ENCODE measurements at regions of chr1 and their contacts with region 1.

Region 1: DNA sequence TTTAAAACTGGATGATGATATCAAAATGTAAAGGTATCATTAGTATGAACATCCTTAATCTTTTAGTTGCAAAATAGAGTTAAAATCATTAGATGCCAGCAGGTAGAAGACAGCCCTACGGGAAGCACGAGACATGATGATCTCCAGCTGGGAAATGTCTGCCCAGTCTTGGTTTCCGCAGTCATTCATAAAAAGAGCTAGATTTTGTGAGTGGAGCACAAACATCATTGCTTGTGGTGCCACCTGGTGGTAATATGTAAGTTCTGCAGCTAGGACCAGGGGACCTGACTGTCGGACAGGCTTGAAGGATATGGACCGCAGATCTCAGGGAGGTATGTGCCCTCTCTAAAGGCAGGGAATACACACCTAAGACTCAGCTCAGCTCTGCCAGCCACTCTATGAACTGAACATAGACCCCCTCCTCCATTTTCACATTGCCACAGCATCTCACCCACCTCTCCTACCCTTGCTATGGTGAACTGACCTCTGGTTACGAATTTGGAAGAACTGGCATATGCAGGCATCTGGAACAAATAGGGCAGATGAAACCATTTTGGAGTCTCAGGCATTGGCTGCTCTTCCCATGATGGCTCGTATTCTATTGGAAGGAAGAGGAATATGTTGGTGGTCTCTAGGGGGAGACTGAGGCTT is 9.2 kb downstream of the FCMR start:
- DNase-seq: peak; percentile 67 to 71 (median 68)
- H3K4me3 ChIP-seq: no peak overlapping the region
- H3K4me3 Mint-ChIP-seq: peak overlapping the region; percentile 21 to 68 (median 54)
- H3K27ac ChIP-seq: peak overlapping the region; percentile 29
- H3K27ac Mint-ChIP-seq: peak overlapping the region; percentile 71 to 93 (median 92)
- H3K4me1 ChIP-seq: peaks cover 98% of the 10 kb centered on the region
- H3K4me1 Mint-ChIP-seq: peaks cover 76 to 96% (median 87%) of the 10 kb centered on the region in 4 donors
- H3K27me3 ChIP-seq: no peaks in the 10 kb centered on the region
- H3K27me3 Mint-ChIP-seq: no peaks in the 10 kb centered on the region

Region 2: GRCh38 chr1:206716870-206717673 is 195.5 kb before region 1 on chr1:
- CTCF ChIA-PET with region 1: interaction called, 10 read pairs
- POLR2A ChIA-PET with region 1: interaction called, 3 read pairs
- intact Hi-C with region 1: no loop called
- DNase-seq: peak; percentile 21 to 59 (median 33)
- H3K4me3 ChIP-seq: no peak overlapping the region
- H3K4me3 Mint-ChIP-seq: peak overlapping the region; percentile 57 to 83 (median 73)
- H3K27ac ChIP-seq: peak overlapping the region; percentile 34
- H3K27ac Mint-ChIP-seq: peak overlapping the region; percentile 87 to 97 (median 95)
- H3K4me1 ChIP-seq: peaks cover 86% of the 10 kb centered on the region
- H3K4me1 Mint-ChIP-seq: peaks cover 68 to 90% (median 81%) of the 10 kb centered on the region in 4 donors
- H3K27me3 ChIP-seq: no peaks in the 10 kb centered on the region
- H3K27me3 Mint-ChIP-seq: no peaks in the 10 kb centered on the region

Region 3: DNA sequence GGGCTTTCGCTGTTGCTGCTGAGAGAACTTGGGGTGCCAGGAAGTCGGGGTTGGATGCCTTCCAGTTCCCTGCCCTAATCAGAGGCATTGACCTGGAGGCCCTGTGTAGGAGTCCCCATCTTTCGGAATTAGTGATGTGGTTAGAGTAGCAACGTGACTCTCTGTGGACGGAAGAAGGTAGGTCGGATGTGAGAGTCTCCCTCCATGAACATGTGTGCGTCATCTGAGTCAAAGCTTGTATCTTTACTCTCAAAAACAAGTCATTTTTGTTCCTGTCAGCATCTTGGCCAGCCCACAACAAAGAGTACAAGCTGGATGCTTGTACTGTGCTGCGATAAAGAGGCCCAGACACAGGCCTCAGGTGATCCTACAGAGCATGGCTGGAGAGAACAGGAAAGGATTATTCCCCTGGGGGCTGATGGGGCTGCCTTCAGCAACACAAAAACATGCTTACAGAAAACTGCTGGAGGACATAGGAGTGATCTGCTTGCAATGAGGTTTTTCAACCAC is 109.3 kb before region 1 on chr1:
- CTCF ChIA-PET with region 1: interaction called, 85 read pairs
- POLR2A ChIA-PET with region 1: interaction called, 14 read pairs
- intact Hi-C with region 1: no loop called
- DNase-seq: peak; percentile 91 to 96 (median 94)
- H3K4me3 ChIP-seq: peak overlapping the region in 1 of 2 donors; percentile 6
- H3K4me3 Mint-ChIP-seq: peak overlapping the region; percentile 4 to 74 (median 56)
- H3K27ac ChIP-seq: peak overlapping the region; percentile 67
- H3K27ac Mint-ChIP-seq: peak overlapping the region; percentile 89 to 99 (median 97)
- H3K4me1 ChIP-seq: peaks cover 60% of the 10 kb centered on the region
- H3K4me1 Mint-ChIP-seq: peaks cover 45 to 83% (median 66%) of the 10 kb centered on the region in 4 donors
- H3K27me3 ChIP-seq: no peaks in the 10 kb centered on the region
- H3K27me3 Mint-ChIP-seq: no peaks in the 10 kb centered on the region

Region 4: GRCh38 chr1:206856674-206857464 is 55.7 kb before region 1 on chr1:
- CTCF ChIA-PET with region 1: interaction called, 73 read pairs
- POLR2A ChIA-PET with region 1: interaction called, 4 read pairs
- intact Hi-C with region 1: no loop called
- DNase-seq: peak in 4 of 5 donors; percentile 8 to 22 (median 16)
- H3K4me3 ChIP-seq: no peak overlapping the region
- H3K4me3 Mint-ChIP-seq: no peak overlapping the region
- H3K27ac ChIP-seq: no peak overlapping the region
- H3K27ac Mint-ChIP-seq: no peak overlapping the region
- H3K4me1 ChIP-seq: peaks cover 7% of the 10 kb centered on the region
- H3K4me1 Mint-ChIP-seq: peaks cover 6 to 10% (median 8%) of the 10 kb centered on the region in 4 donors
- H3K27me3 ChIP-seq: no peaks in the 10 kb centered on the region
- H3K27me3 Mint-ChIP-seq: peaks cover 0 to 9% of the 10 kb centered on the region in 2 donors

Region 5: DNA sequence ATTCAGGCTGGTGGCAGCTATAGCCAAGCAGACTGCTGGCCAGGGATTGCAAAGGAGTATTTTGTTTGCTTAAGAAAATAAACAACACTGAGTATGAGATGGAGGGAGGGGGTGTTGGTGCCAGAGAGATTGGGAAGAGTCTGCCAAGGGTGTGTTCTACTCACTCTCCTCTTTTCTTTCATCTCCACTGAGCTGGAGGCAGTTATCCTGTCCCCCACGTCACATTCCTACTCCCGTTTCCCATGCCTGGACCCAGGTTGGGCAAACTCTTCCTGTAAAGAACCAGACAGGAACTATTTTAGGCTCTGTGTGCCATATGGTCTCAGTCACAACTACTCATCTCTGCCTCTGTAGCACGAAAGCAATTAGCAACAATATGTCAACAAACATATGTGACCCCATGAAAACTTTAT is 16.7 kb before region 1 on chr1:
- CTCF ChIA-PET with region 1: interaction called, 30 read pairs
- POLR2A ChIA-PET with region 1: interaction called, 139 read pairs
- intact Hi-C with region 1: no loop called
- DNase-seq: no peak
- H3K4me3 ChIP-seq: no peak overlapping the region
- H3K4me3 Mint-ChIP-seq: no peak overlapping the region
- H3K27ac ChIP-seq: no peak overlapping the region
- H3K27ac Mint-ChIP-seq: peak overlapping the region in 1 of 7 donors; percentile 55
- H3K4me1 ChIP-seq: peaks cover 9% of the 10 kb centered on the region
- H3K4me1 Mint-ChIP-seq: peaks cover 5 to 30% (median 17%) of the 10 kb centered on the region in 4 donors
- H3K27me3 ChIP-seq: no peaks in the 10 kb centered on the region
- H3K27me3 Mint-ChIP-seq: peaks cover 0 to 3% of the 10 kb centered on the region in 2 donors

Region 6: DNA sequence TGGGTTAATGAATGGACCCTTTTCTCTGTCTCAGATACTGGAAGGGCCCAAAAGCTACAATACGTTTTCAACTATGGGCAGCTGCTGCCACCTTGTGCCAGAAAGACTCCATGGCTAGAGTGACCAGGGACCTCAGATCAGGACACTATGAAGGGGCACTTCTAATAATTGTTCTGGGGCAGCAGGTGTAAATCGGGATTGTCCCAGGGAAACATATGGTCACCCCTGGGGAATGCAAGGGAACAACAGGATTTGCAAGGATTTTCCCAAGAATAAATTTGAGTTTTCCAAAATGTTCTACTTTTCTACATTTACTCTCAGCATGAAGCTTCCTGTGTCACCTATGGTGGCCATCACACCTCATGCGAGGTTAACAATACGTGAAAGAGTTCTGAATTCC is 69.6 kb after region 1 on chr1:
- CTCF ChIA-PET with region 1: interaction called, 28 read pairs
- POLR2A ChIA-PET with region 1: interaction called, 5 read pairs
- intact Hi-C with region 1: loop called (anchors 1 kb)
- DNase-seq: peak; percentile 50 to 60 (median 53)
- H3K4me3 ChIP-seq: no peak overlapping the region
- H3K4me3 Mint-ChIP-seq: no peak overlapping the region
- H3K27ac ChIP-seq: no peak overlapping the region
- H3K27ac Mint-ChIP-seq: no peak overlapping the region
- H3K4me1 ChIP-seq: no peaks in the 10 kb centered on the region
- H3K4me1 Mint-ChIP-seq: no peaks in the 10 kb centered on the region
- H3K27me3 ChIP-seq: no peaks in the 10 kb centered on the region
- H3K27me3 Mint-ChIP-seq: peaks cover 12 to 17% of the 10 kb centered on the region in 2 donors

Region 7: DNA sequence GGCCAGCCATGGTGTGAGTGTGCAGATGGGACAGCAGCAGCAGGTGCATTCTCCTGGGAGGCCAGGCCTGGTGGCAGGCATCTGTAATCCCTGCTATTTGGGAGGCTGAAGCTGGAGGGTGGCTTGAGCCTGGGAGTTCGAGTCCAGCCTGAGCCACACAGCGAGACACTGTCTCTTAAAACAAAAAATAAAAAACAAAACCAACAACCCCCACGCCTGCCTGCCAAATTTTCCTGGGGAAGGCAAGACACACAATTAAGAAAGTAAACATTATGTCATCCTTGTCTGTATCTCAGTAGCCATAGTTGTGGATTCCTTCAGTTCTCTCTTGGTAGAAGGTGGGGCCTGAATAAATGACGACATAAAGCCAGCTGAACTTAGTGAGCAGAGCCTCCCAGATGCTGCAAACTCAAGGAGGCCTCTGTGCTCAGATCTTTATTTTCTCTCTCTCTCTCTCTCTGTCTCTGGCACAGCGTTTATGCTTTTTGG is 1056.0 kb after region 1 on chr1:
- CTCF ChIA-PET with region 1: no interaction called
- POLR2A ChIA-PET with region 1: no interaction called
- intact Hi-C with region 1: no loop called
- DNase-seq: no peak
- H3K4me3 ChIP-seq: no peak overlapping the region
- H3K4me3 Mint-ChIP-seq: no peak overlapping the region
- H3K27ac ChIP-seq: no peak overlapping the region
- H3K27ac Mint-ChIP-seq: no peak overlapping the region
- H3K4me1 ChIP-seq: peaks cover 5% of the 10 kb centered on the region
- H3K4me1 Mint-ChIP-seq: peaks cover 0 to 3% (median under 1%) of the 10 kb centered on the region in 4 donors
- H3K27me3 ChIP-seq: no peaks in the 10 kb centered on the region
- H3K27me3 Mint-ChIP-seq: peaks cover 13 to 15% of the 10 kb centered on the region in 2 donors

Measured in CD4-positive, alpha-beta memory T cell (primary cell).